Panc1 (cell line): ENCODE measurements at regions of chr6 and their contacts with region 1.

Region 1: DNA sequence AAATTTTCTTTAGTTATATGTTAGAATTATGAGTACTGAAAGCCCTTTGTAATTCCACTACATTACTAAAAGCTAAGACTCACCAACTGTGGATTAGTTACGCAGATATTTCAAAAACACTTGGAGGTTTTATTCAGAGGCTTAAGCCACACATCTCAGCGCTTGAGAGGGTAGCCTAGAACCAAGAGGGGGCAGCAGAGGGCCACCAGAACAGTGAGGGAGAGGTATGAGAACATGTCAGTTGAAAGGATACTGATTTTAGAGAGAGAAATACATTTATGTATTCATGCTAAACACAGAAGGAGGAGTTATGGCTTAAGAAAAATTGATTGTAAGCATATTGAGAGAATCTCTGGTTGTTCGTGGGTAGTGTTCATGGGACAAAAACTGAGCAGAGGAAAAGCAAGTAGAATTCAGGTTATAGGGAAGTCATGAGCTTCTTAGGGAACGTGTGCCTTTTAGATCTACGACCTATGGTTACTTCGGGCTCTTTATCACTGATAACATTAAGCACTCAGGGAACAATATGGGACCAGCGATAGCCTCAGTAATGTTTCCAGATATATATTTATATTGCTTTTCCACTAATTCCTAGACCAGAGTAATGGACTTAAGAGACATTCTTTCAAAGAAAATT is 20.4 kb upstream of the SERINC1 start:
- DNase-seq: peak; percentile 67
- ATAC-seq: peak; percentile 100
- H3K4me3 ChIP-seq: no peak overlapping the region
- H3K27ac ChIP-seq: no peak overlapping the region
- H3K4me1 ChIP-seq: no peaks in the 10 kb centered on the region
- H3K27me3 ChIP-seq: peaks cover 2% of the 10 kb centered on the region; the same call in 1 of the 2 replicates
- CTCF ChIP-seq: peak; percentile 94

Region 2: GRCh38 chr6:122730775-122731386 is 238.8 kb after region 1 on chr6:
- CTCF ChIA-PET with region 1: no interaction called
- POLR2A ChIA-PET with region 1: no interaction called
- in situ Hi-C with region 1: no loop called
- intact Hi-C with region 1: loop called (anchors 2 kb)
- DNase-seq: peak; percentile 24
- ATAC-seq: no peak
- H3K4me3 ChIP-seq: no peak overlapping the region
- H3K27ac ChIP-seq: no peak overlapping the region
- H3K4me1 ChIP-seq: no peaks in the 10 kb centered on the region
- H3K27me3 ChIP-seq: peaks cover 2% of the 10 kb centered on the region; the same call in 1 of the 2 replicates
- CTCF ChIP-seq: peak; percentile 85; the same call in 1 of the 2 replicates